ENCODE measurements at regions of chr1 and their contacts with region 1.

Region 1: GRCh38 chr1:27556781-27557595 is 47.0 kb downstream of the AHDC1 start:
- DNase-seq: peak; percentile 95
- H3K27ac ChIP-seq: peak overlapping the region; percentile 98
- CTCF ChIP-seq: peak; percentile 83

Region 2: GRCh38 chr1:27531959-27532833 is 24.8 kb before region 1 on chr1:
- CTCF ChIA-PET with region 1: interaction called, 10 read pairs
- POLR2A ChIA-PET with region 1: interaction called, 3 read pairs
- DNase-seq: no peak
- H3K27ac ChIP-seq: peak overlapping the region; percentile 98
- CTCF ChIP-seq: no peak

Region 3: GRCh38 chr1:27542408-27543273 is 14.3 kb before region 1 on chr1:
- CTCF ChIA-PET with region 1: interaction called, 28 read pairs
- POLR2A ChIA-PET with region 1: no interaction called
- DNase-seq: peak; percentile 87
- H3K27ac ChIP-seq: peak overlapping the region; percentile 99
- CTCF ChIP-seq: no peak

Region 4: DNA sequence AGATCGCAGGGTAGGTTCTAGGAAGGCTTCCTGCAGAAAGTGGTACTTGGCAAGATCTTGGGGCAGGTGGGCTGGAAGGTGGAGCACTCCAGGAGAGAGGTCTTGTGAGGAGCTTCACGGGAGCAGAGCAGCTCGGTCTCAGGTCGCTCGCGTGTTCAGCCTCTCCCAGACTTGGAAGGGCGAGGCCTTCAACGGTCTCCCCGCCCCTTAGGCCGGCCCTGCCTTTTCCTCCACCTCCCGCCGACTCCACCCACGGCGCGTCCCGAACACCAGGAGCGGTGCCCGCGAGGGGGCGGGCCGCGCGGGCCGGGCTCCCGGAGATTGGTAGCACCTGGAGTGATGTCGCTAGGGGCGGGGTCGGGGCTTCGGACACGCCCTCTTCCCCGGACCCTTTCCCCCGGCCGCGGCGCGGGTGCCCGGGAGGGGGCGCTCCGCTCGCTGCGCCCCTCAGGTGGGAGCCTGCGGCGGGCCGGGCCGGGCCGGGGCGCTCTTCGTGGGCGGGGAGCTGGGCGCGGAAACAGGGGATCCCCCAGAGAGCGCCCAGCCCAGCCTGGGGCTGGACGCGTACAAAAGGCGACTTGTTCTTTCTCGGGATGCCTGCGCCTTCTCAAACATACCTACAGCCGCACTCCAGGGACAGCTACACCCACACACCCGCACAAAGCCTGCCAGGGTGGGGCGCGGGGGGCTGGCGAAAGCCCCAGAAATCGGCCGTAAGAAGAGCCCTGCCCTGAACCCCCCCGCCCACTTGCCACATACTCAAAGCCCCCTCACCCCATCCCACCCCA is 11.5 kb after region 1 on chr1:
- CTCF ChIA-PET with region 1: interaction called, 46 read pairs
- POLR2A ChIA-PET with region 1: no interaction called
- DNase-seq: peak; percentile 94
- H3K27ac ChIP-seq: peak overlapping the region; percentile 98
- CTCF ChIP-seq: peak; percentile 93

Region 5: GRCh38 chr1:27591622-27592021 is 34.6 kb after region 1 on chr1:
- CTCF ChIA-PET with region 1: interaction called, 10 read pairs
- POLR2A ChIA-PET with region 1: no interaction called
- DNase-seq: no peak
- H3K27ac ChIP-seq: peak overlapping the region; percentile 93
- CTCF ChIP-seq: no peak

Region 6: GRCh38 chr1:27603681-27604578 is 46.9 kb after region 1 on chr1 and contains the start of gene AHDC1:
- CTCF ChIA-PET with region 1: interaction called, 67 read pairs
- POLR2A ChIA-PET with region 1: interaction called, 5 read pairs
- DNase-seq: peak; percentile 91
- H3K27ac ChIP-seq: peak within 1 kb of the TSS; percentile 93
- CTCF ChIP-seq: no peak

Region 7: GRCh38 chr1:27772933-27773825 is 216.2 kb after region 1 on chr1 and contains the start of gene STX12:
- CTCF ChIA-PET with region 1: no interaction called
- POLR2A ChIA-PET with region 1: no interaction called
- DNase-seq: peak; percentile 99
- H3K27ac ChIP-seq: peak within 1 kb of the TSS; percentile 84
- CTCF ChIP-seq: no peak

Measured in RWPE1 (cell line).